ENCODE measurements at regions of chr9 and their contacts with region 1.

Region 1: DNA sequence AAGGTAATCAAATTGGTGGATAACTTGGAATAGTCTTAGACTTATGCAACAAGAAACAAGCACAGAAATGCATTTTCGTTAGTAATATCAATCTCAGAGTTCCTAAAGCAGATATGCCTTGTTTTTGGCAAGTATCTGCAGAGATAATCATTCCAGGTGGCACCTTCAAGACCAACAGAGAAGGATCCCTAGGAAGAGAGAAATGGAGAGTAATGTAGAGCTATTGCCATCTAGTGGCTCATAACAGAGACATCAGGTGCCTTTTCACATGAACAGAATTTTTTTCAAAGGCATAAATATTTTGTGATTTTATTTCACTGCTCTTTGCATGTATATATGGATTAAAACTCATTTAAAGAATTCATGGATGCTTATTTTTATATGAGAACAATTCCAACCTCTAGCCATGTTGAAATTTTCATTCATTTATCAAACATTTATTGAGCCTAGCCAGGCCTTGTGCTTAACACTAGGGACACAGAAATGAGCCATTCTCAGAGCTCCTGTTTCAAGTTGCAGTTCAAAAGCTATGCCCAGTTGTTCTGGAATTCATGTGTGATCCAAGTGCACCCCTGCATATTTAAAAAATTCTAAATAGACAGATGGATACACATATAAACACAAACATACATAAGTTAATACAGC is 117.5 kb upstream of the OR13F1 start:
- DNase-seq: peak; percentile 22
- CTCF ChIP-seq: peak; percentile 49

Region 2: DNA sequence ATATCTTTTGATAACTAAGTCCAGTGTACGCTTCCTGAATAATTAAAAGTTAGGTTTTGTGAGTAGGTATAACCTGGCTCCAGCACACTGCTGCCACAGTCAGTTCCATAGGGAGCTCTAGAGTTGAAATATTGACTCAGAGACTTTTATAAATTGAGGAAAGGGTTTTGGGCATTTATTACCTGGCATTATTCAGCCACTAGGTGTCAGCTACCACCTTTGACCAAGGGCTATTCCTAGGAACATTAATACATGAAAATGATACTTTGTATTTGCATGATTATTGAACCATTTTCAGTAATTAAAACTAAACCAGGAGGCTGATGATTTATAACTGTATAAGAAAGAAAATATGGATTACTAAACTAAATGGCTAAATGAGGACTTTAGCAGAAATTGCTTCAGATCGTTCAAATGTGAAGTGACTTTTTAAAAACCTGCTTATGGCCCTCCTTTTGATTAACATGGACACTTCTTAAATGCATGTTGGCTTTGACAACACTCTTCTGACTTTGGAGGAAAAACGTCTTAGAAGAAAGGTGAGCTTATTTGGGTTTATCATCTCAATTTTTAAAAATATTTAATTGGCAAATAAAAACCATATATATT is 209.4 kb before region 1 on chr9:
- CTCF ChIA-PET with region 1: interaction called, 15 read pairs
- POLR2A ChIA-PET with region 1: no interaction called
- DNase-seq: no peak
- CTCF ChIP-seq: peak; percentile 39

Region 3: DNA sequence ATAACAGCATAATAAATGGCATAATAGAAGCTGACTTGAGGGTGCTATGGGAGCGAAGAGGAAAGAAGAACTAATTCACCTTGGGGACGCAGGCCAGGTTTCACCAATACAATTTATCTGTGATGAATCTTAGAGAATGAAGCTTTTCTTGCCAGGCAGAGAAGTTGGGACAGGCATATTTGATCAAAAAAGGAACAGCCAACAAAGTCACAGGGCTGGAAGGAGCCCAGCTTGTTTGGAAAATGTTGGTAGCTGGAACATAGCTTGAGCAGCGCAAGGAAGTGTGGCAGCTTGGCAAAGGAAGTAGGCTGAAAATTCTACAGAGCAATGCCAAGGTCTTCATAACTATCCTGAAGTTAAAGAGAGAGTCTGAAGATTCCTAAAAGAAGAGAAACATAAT is 64.0 kb before region 1 on chr9:
- CTCF ChIA-PET with region 1: no interaction called
- POLR2A ChIA-PET with region 1: no interaction called
- DNase-seq: no peak
- CTCF ChIP-seq: no peak

Region 4: DNA sequence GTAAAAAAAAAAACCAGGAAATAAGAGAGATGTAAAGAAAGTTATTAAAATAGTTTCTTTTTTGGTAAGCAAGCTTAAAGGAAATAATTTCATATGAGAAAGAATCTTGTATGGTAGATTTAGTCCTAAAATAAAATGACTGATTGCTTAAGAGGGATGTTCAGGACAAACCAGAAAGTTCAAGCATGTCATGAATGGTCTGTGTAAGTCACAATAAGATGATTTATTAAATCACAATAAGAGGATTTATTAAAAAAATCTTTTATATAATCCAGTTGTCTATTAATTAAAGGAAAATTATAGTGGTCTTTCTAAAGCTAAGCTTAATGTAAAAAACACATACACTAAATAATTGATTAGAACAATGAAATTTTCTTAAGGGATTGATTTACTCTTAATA is 25.7 kb after region 1 on chr9:
- CTCF ChIA-PET with region 1: no interaction called
- POLR2A ChIA-PET with region 1: no interaction called
- DNase-seq: no peak
- CTCF ChIP-seq: no peak

Region 5: GRCh38 chr9:104435059-104435458 is 48.5 kb after region 1 on chr9:
- CTCF ChIA-PET with region 1: no interaction called
- POLR2A ChIA-PET with region 1: no interaction called
- DNase-seq: no peak
- CTCF ChIP-seq: no peak

Measured in GM10248 (cell line).